AG04449 (cell line): ENCODE measurements at regions of chr13 and their contacts with region 1.

Region 1: DNA sequence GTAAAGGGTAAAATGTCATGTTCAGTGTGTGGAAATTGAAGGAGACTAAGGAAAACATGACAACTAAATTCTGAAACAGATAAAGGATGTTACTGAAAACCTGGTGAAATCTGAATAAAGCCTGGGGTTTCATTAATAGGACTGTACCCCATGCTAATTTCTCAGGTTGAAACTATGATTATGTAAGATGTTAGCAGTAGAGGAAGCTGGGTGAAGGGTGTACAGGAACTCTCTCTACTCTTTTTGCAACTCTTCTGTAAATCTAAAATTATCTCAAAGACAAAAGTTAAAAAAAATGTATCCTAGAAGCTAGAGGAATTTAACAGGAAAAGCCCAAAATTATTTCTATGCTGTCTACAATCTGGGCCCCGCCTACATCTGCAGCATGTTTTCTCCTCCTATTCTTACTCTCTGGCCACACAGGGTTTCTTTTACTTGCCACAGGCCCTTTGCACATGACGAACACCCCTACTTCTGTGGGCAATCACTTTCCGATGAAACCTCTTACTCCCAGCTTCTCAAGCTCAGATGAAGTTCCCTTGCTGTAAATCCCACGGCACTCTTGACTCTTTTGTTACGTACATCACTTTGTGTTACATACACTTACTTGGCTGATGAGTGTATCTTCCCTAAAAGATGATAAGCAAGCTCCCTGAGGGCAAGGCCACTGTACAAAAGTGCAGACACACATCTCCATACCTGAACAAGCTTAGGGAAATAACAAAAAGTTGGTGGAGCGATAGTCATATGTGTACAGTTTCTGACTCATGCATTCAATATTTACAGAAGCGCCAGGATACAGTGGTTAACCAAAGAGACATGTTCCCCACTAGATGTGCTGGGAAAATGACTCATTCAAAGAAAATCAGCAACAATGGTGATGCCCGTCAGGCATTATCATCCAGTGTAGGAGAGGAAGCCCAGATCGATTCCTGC is 32.6 kb downstream of the RUBCNL start:
- DNase-seq: peak; percentile 86
- H3K4me3 ChIP-seq: no peak overlapping the region
- CTCF ChIP-seq: no peak

Region 2: DNA sequence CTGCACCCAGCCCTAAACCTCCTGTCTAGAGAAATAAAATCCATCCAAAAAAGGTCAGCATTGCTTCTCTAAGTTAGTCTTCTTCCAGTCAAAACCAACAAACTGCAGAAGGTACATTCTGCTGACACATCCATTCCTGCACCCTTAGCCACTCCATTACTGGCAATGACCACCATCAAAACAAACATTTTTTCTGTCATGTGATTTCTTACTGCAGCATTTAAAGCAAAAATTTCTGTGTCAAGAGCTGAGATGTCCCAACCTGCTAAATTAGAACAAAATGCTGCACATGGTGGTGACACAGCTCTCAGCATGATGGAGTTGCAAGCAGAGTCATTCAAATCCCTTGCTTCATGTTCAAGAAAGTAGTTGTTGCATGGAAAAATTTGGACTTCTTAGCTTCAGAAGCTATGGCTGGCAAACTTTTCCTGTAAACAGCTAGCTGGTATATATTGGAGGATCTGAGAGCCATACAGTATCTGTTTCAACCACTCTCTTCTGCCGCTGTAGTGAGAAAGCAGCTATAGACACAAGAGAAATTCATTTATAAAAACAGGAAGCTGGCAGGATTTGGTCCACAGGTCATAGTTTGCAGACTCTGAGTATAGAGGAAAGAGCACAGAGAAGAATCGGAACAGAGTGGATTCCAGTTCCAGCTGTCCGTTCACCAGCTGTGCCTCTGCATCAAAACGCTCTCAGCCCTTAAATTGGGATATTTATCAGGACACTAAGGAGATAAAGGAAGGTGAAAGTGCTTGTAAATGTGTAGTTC is 15.3 kb after region 1 on chr13:
- CTCF ChIA-PET with region 1: interaction called, 4 read pairs
- POLR2A ChIA-PET with region 1: interaction called, 14 read pairs
- DNase-seq: peak; percentile 85
- H3K4me3 ChIP-seq: no peak overlapping the region
- CTCF ChIP-seq: no peak

Region 3: DNA sequence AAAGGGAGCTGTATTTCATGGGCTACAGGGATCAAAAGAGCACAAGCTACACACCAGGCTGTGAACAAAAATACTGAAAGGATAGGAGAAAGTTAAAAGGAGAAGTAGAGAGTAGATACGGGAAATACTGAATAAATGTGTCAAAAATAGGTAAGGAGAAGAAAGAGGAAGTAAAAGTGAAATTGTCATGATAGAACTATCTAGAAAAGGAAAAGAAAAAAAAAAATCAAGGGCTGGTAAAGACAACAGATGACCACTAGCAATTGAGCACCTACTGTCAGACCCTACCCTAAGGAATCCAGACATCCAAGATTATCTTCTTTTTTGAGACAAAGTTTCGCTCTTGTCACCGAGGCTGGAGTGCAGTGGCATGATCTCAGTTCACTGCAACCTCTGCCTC is 27.8 kb after region 1 on chr13:
- CTCF ChIA-PET with region 1: no interaction called
- POLR2A ChIA-PET with region 1: no interaction called
- DNase-seq: no peak
- H3K4me3 ChIP-seq: no peak overlapping the region
- CTCF ChIP-seq: no peak

Region 4: DNA sequence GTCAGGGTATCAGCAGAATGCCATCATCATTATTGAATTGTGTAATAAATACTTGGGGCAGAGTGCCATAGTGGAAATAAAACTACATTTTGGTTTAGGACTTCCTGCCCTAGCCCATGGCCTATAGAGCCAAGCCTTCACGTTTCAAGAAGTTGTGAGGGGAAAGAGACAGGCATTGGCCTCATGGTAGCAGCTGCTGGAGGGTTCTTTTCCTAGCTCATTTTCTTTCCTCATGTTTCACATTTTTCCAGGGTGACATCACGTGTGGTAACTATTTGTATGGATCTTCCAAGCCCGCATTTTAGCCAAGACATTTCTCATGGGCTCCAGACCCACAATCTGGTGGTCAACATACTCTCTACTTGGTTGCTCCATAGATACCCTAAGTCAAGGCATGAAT is 279.0 kb after region 1 on chr13:
- CTCF ChIA-PET with region 1: no interaction called
- POLR2A ChIA-PET with region 1: no interaction called
- DNase-seq: peak; percentile 42
- H3K4me3 ChIP-seq: no peak overlapping the region
- CTCF ChIP-seq: no peak